ENCODE measurements at regions of chr17 and their contacts with region 1.

Region 1: GRCh38 chr17:30104575-30105339 is 11.9 kb upstream of the NSRP1 start:
- DNase-seq: peak; percentile 75
- H3K4me3 Mint-ChIP-seq: peak overlapping the region; percentile 63
- H3K27ac Mint-ChIP-seq: no peak overlapping the region
- H3K4me1 Mint-ChIP-seq: peaks cover 8% of the 10 kb centered on the region
- H3K27me3 Mint-ChIP-seq: peaks cover 8% of the 10 kb centered on the region

Region 2: DNA sequence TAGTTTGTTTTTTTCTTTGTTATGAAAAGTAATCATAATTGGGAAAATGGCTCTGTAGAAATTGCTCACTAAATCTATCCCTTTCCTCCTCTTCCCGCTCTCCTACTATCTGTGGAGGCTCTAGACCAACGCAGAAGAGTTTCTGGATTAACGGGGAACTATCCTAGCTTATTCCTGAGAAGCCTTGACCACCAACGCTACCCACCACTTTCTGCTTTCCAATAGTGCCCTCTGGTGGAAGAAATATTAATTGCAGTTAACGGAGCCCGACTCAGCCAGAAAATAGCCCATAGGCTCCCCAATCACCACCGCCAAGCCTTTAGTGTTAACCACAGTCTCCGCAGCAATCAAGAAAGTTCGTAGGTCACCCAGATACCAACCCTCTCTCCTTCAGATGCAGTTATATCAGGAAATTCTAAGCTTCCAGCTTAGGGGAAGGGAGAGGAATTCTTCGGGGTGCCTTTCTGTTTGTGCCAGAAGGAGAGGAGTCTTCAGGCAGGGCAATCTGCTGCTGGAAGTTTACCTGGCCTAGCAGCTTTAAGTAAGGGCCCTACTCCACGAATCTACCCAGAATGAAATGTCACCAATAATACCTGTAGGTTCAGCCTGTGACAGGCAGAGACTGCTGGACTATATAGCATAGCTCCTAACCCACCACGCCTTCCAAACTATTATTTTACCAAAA is 11.2 kb before region 1 on chr17:
- CTCF ChIA-PET with region 1: interaction called, 73 read pairs
- POLR2A ChIA-PET with region 1: no interaction called
- DNase-seq: peak; percentile 45
- H3K4me3 Mint-ChIP-seq: no peak overlapping the region
- H3K27ac Mint-ChIP-seq: no peak overlapping the region
- H3K4me1 Mint-ChIP-seq: peaks cover 7% of the 10 kb centered on the region
- H3K27me3 Mint-ChIP-seq: peaks cover 52% of the 10 kb centered on the region

Region 3: DNA sequence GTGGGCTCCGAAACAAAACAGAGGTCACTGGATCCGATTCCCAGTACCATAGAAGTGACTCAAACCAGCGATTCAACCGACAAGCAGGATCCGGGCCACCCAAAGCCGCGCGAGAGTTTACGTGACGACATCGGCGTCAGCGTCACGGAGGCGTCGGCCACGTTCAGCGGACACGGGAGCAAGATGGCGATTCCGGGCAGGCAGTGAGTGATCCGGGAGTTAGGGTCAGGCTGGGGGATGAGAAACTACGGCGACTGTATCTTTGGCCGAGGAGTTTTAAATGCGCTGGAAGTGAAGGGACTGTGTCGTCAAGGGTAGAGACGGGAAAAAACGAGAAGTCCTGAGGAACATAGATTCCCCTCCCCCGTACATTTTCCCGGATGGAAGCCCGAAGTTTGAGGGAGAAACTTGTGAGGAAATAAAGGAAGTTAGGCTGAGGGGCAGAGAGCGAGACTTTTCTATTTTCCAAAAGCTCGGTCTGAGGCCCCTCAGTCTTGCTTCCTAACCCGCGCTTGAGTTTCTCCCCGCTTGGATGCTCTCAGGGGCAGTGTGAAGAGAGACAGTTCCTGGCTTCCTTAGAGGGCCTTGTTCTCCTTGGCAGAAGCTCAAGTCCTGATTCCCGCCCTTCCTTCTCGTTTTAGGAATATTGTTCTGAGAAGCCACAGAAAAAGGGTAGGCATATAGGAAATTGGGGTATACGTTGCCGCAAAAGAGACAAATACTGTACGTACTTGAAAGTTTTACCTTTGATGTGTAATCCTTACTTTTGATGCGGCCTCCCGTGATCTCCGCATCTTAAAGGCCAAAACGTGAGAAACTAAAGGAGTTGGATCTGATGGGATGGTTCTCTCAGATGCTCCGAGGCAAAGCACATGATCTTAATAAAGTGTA is 12.1 kb after region 1 on chr17 and contains the start of gene NSRP1:
- CTCF ChIA-PET with region 1: interaction called, 54 read pairs
- POLR2A ChIA-PET with region 1: interaction called, 30 read pairs
- DNase-seq: peak; percentile 97
- H3K4me3 Mint-ChIP-seq: peak within 1 kb of the TSS; percentile 86
- H3K27ac Mint-ChIP-seq: peak within 1 kb of the TSS; percentile 90
- H3K4me1 Mint-ChIP-seq: peaks cover 62% of the 10 kb centered on the region
- H3K27me3 Mint-ChIP-seq: no peaks in the 10 kb centered on the region
- total RNA-seq, gene NSRP1: 21.6 to 22.7 TPM

Region 4: GRCh38 chr17:30124273-30124796 is 19.6 kb after region 1 on chr17:
- CTCF ChIA-PET with region 1: interaction called, 79 read pairs
- POLR2A ChIA-PET with region 1: no interaction called
- DNase-seq: no peak
- H3K4me3 Mint-ChIP-seq: no peak overlapping the region
- H3K27ac Mint-ChIP-seq: no peak overlapping the region
- H3K4me1 Mint-ChIP-seq: peaks cover 39% of the 10 kb centered on the region
- H3K27me3 Mint-ChIP-seq: no peaks in the 10 kb centered on the region

Region 5: DNA sequence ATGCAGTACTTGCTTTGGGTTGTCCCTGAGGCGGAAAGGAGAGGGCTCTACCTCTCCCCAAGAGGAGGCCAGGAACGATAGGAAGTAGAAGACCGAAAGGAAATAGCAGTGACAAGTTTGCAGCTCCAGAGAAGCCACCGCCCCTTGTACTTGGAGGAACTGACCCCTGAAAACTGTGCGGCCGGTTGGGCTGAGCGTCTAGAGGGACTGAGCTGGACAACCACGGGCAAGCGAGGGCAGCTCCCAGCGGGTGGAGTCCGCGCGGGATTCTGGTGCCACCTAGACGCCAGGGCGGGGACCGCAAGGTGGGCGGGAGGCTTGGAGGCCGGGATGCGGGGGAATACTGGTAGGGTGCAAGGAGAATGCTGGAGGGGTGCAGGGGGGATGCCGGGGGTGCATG is 132.0 kb after region 1 on chr17:
- CTCF ChIA-PET with region 1: interaction called, 14 read pairs
- POLR2A ChIA-PET with region 1: no interaction called
- DNase-seq: no peak
- H3K4me3 Mint-ChIP-seq: peak overlapping the region; percentile 46
- H3K27ac Mint-ChIP-seq: no peak overlapping the region
- H3K4me1 Mint-ChIP-seq: peaks cover 25% of the 10 kb centered on the region
- H3K27me3 Mint-ChIP-seq: peaks cover 65% of the 10 kb centered on the region

Region 6: GRCh38 chr17:30379303-30379902 is 274.6 kb after region 1 on chr17:
- CTCF ChIA-PET with region 1: interaction called, 11 read pairs
- POLR2A ChIA-PET with region 1: interaction called, 3 read pairs
- DNase-seq: peak; percentile 46
- H3K4me3 Mint-ChIP-seq: peak overlapping the region; percentile 80
- H3K27ac Mint-ChIP-seq: peak overlapping the region; percentile 40
- H3K4me1 Mint-ChIP-seq: peaks cover 51% of the 10 kb centered on the region
- H3K27me3 Mint-ChIP-seq: peaks cover 13% of the 10 kb centered on the region